ENCODE measurements at regions of chr5 and their contacts with region 1.

Region 1: DNA sequence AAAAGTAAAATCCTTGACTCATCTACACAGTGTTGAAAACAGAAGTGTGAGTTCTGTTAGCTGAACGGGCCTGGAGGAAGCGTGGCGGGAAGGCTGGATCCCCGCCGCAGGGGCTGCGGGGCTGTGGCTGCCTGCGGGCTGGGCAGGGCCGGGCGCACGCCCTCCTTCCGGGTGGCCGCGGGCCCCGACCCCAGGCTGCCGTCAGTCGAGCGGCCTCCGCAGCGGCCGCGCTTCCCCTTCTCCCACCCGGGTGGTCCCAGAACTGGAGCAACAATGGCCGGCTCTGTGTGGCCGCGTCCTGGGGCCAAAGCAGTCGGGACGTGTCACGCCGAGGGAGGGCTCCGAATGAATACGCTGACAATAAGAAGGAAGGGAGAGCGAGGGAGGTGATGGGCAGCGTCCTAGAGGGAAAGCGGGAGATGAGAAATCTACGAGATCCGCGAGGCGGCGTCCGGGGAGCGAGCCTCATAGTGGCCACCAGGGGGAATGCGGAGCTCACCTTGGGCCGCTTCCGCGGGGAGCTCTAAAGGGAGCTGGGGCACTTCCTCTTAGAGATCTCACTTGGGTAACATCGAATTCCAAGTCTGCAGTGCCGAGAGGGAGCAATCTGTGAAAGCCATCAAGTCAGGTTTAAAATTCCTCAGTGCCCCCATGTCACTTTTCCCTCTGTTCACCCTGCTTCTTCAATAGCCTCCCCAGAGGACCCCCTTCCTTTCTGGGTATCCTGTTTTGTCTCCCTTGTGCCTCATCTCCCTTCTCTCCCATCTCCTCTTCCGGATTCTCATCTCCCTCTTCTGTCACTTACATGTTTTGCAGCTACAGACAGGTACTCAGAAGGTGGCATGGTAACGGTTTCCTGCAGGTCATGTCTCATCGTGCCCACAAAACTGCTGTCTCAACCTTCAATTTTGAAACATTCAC is 83.9 kb downstream of the SLC1A3 start:
- DNase-seq: peak; percentile 71 to 91 (median 84)
- ATAC-seq: peak; percentile 66 to 81 (median 73)
- H3K4me3 ChIP-seq: peak overlapping the region; percentile 24 to 74 (median 56)
- H3K27ac ChIP-seq: peak overlapping the region; percentile 23 to 84 (median 73)
- H3K4me1 ChIP-seq: peaks cover 0 to 60% (median 25%) of the 10 kb centered on the region in 12 donors
- H3K27me3 ChIP-seq: no peaks in the 10 kb centered on the region
- CTCF ChIP-seq: peak; percentile 59 to 88 (median 74)
- POLR2A ChIP-seq: peak in 1 of 2 donors; percentile 21

Region 2: GRCh38 chr5:36264202-36264760 is 426.0 kb before region 1 on chr5:
- intact Hi-C with region 1: loop called in 5 of 10 experiments (anchors 5 to 10 kb)
- DNase-seq: no peak
- ATAC-seq: no peak
- H3K4me3 ChIP-seq: no peak overlapping the region
- H3K27ac ChIP-seq: no peak overlapping the region
- H3K4me1 ChIP-seq: no peaks in the 10 kb centered on the region
- H3K27me3 ChIP-seq: no peaks in the 10 kb centered on the region
- CTCF ChIP-seq: no peak
- POLR2A ChIP-seq: no peak

Region 3: DNA sequence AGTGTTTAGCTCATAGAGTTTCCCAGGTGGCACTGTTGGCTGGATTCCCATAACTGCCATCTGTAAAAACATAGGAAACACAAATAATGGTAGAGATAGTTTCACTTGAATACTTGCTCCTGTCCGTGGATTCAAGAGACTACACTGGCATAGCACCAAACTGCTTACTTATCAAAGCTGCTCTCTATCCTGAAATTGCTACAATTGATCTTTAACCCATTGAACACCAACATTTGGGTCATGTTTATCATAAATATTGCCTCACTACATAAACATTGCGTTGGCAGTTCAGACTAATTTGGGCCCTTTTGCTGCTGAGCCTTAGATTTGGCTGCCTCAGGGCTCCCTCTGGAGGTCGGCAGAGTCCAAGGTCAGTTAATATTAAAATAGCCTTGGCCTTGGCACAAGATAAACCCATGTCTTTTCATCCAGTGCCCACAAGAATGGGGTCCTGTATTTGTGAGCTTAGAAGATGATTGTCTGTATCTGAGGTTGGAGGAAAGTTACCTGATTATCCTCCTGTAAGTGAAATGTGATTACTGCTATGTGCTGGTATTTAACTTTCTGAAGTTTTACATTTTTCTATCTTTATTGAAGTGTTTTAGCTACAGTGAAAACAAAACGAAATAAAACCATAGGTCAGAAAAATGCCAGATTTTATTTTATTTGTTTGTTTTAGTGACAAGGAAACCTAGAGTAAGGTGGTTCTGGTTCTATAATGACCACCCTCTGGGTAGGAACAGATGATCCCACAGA is 384.6 kb before region 1 on chr5:
- intact Hi-C with region 1: loop called in 1 of 10 experiments (anchors 10 kb)
- DNase-seq: peak; percentile 41 to 48 (median 47)
- ATAC-seq: peak; percentile 68 to 86 (median 80)
- H3K4me3 ChIP-seq: no peak overlapping the region
- H3K27ac ChIP-seq: no peak overlapping the region
- H3K4me1 ChIP-seq: peaks cover 0 to 27% (median 10%) of the 10 kb centered on the region in 12 donors
- H3K27me3 ChIP-seq: no peaks in the 10 kb centered on the region
- CTCF ChIP-seq: peak; percentile 38 to 79 (median 68)
- POLR2A ChIP-seq: no peak

Region 4: GRCh38 chr5:36507332-36507952 is 182.9 kb before region 1 on chr5:
- intact Hi-C with region 1: loop called in 6 of 10 experiments (anchors 2 to 10 kb)
- DNase-seq: peak; percentile 58 to 85 (median 71)
- ATAC-seq: peak in 3 of 4 donors; percentile 54 to 71 (median 54)
- H3K4me3 ChIP-seq: no peak overlapping the region
- H3K27ac ChIP-seq: no peak overlapping the region
- H3K4me1 ChIP-seq: peaks cover 0 to 6% (median 0%) of the 10 kb centered on the region in 12 donors
- H3K27me3 ChIP-seq: no peaks in the 10 kb centered on the region
- CTCF ChIP-seq: peak; percentile 64 to 88 (median 82)
- POLR2A ChIP-seq: no peak

Region 5: GRCh38 chr5:36606428-36607113 is 83.7 kb before region 1 on chr5 and contains the start of gene SLC1A3:
- intact Hi-C with region 1: loop called in 9 of 10 experiments (anchors 1 to 10 kb)
- DNase-seq: peak in 4 of 5 donors; percentile 36 to 62 (median 46)
- ATAC-seq: peak; percentile 81 to 91 (median 86)
- H3K4me3 ChIP-seq: peak within 1 kb of the TSS; percentile 26 to 68 (median 62)
- H3K27ac ChIP-seq: peak within 1 kb of the TSS; percentile 58 to 91 (median 86)
- H3K4me1 ChIP-seq: peaks cover 0 to 29% (median 2%) of the 10 kb centered on the region in 12 donors
- H3K27me3 ChIP-seq: peaks cover 0 to 5% (median 0%) of the 10 kb centered on the region in 9 donors
- CTCF ChIP-seq: no peak
- POLR2A ChIP-seq: peak in 1 of 2 donors; percentile 28
- total RNA-seq, gene SLC1A3: 49.5 to 120 (median 66.1) TPM

Measured in heart left ventricle (tissue), 16 donors.